Right cardiac atrium (tissue), 5 donors: ENCODE measurements at regions of chr17 and their contacts with region 1.

Region 1: GRCh38 chr17:40536295-40537171 is 28.7 kb downstream of the CCR7 start:
- DNase-seq: peak; percentile 79 to 83 (median 82)
- ATAC-seq: peak; percentile 47 to 74
- H3K4me3 ChIP-seq: no peak overlapping the region
- H3K27ac ChIP-seq: peak overlapping the region; percentile 73
- H3K4me1 ChIP-seq: peaks cover 36% of the 10 kb centered on the region
- H3K27me3 ChIP-seq: no peaks in the 10 kb centered on the region

Region 2: GRCh38 chr17:40362696-40363110 is 173.8 kb before region 1 on chr17:
- intact Hi-C with region 1: loop called (anchors 5 to 10 kb)
- DNase-seq: peak; percentile 76 to 87 (median 86)
- ATAC-seq: peak; percentile 18 to 56
- H3K4me3 ChIP-seq: peak overlapping the region; percentile 47
- H3K27ac ChIP-seq: no peak overlapping the region
- H3K4me1 ChIP-seq: no peaks in the 10 kb centered on the region
- H3K27me3 ChIP-seq: no peaks in the 10 kb centered on the region

Region 3: DNA sequence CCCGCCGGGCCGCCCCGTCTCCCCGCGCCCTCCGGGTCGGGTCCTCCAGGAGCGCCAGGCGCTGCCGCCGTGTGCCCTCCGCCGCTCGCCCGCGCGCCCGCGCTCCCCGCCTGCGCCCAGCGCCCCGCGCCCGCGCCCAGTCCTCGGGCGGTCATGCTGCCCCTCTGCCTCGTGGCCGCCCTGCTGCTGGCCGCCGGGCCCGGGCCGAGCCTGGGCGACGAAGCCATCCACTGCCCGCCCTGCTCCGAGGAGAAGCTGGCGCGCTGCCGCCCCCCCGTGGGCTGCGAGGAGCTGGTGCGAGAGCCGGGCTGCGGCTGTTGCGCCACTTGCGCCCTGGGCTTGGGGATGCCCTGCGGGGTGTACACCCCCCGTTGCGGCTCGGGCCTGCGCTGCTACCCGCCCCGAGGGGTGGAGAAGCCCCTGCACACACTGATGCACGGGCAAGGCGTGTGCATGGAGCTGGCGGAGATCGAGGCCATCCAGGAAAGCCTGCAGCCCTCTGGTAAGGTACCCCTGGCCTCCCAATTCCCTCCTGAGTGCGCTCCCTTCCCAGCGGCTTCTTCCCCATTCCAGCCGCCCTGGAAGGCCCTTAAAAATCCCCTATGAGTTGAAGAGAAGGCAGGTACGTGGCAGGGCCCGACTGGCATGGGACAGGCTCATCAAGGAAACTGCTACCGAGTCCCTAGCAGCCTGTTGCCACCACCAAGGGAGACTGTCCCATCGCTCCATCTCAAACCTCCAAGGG is 92.8 kb before region 1 on chr17:
- intact Hi-C with region 1: loop called (anchors 2 to 10 kb)
- DNase-seq: peak; percentile 87 to 95 (median 95)
- ATAC-seq: peak; percentile 40 to 54
- H3K4me3 ChIP-seq: peak overlapping the region; percentile 63
- H3K27ac ChIP-seq: peak overlapping the region; percentile 80
- H3K4me1 ChIP-seq: peaks cover 12% of the 10 kb centered on the region
- H3K27me3 ChIP-seq: no peaks in the 10 kb centered on the region

Region 4: DNA sequence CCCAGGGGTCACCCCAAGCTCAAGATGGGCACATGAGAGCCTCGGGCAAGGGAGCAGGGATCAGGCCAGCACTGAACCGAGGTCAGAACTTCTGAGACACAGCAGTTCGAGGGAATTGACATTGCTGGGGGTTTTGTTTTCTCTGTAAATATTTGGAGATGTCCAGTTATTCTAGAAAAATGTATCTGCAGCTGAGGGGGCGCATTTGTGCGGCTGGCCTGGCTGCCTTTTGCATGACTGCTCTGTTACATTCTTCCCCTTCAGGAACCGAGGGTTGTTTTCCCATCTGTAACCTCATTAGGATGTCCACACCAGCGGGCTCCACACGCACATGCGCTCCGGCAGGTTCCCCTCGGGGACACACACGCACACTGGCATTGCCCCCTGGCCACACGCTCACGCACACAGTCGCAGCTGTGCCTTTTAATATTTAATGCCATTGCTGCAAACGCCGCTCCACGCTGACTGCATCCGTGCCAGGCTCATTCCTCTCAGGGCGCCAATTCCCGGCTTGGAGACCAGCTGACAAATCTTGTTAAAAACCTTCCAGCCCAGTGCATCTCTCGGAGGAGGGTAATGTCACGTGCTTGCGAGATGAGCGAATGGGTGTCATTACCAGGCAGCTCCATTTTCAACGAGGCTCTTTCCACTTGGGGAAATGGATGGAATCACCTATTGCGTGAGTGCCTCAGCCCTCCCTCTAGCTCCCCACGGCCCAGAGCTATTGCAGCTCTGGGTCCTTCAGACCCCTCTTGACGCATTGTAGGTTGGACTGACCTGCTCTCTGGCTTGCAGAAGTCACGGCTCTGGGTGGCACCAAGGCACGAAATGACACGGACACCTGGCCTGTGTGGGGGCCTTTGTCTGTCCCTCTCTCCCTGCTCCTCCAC is 15.6 kb after region 1 on chr17:
- intact Hi-C with region 1: loop called in 2 of 4 experiments (anchors 2 kb)
- DNase-seq: peak; percentile 75 to 82 (median 79)
- ATAC-seq: no peak
- H3K4me3 ChIP-seq: no peak overlapping the region
- H3K27ac ChIP-seq: peak overlapping the region; percentile 76
- H3K4me1 ChIP-seq: peaks cover 61% of the 10 kb centered on the region
- H3K27me3 ChIP-seq: no peaks in the 10 kb centered on the region